ENCODE measurements at regions of chr17 and their contacts with region 1.

Region 1: GRCh38 chr17:31558748-31559644 is 167.5 kb downstream of the RAB11FIP4 start:
- DNase-seq: peak; percentile 82 to 91
- ATAC-seq: peak; percentile 85 to 86
- H3K4me3 ChIP-seq: peak overlapping the region; percentile 81
- H3K27ac ChIP-seq: peak overlapping the region; percentile 97 to 98
- H3K4me1 ChIP-seq: peaks cover 31% of the 10 kb centered on the region
- CTCF ChIP-seq: peak; percentile 99
- EP300 ChIP-seq: no peak
- POLR2A ChIP-seq: peak; percentile 67
- RAD21 ChIP-seq: peak; percentile 71 to 96

Region 2: DNA sequence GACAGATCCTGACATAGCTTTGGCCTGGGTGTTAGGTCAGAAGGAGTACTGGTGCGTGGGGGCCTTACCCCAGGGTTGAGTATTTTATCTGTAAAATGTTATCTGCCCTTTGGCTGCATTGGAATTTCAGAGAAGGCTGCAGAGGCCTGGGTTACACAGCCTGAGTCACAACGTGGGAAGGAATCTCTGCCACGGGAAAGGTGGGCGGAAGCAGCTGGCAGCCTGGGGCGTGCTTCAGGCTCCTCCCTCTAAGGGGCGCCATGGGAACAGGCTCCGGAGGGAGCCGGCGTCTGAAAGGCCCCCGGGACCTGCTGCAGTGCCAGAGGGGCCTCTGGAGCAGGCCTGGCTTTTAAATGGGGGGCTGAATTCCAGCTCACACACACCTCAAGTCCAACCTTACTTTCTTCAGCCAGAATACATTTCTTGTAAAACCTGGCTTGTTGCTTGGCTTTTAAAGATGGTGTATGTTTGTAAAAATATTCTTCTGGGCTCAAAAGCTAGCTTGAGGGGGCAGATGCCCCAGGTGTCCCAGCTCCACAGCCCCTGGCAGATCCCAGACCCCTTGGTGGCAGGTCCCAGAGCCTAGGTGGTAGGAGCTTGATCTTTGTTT is 25.3 kb before region 1 on chr17:
- CTCF ChIA-PET with region 1: interaction called, 17 read pairs
- POLR2A ChIA-PET with region 1: no interaction called
- DNase-seq: peak; percentile 45 to 79
- ATAC-seq: peak; percentile 58 to 83
- H3K4me3 ChIP-seq: no peak overlapping the region
- H3K27ac ChIP-seq: peak overlapping the region in 1 of 2 experiments; percentile 29; a peak in 3 of 6 replicates
- H3K4me1 ChIP-seq: peaks cover 7% of the 10 kb centered on the region
- CTCF ChIP-seq: peak; percentile 39
- EP300 ChIP-seq: no peak
- POLR2A ChIP-seq: no peak
- RAD21 ChIP-seq: peak; percentile 56 to 63

Region 3: GRCh38 chr17:31581022-31581490 is 22.1 kb after region 1 on chr17:
- CTCF ChIA-PET with region 1: interaction called, 12 read pairs
- POLR2A ChIA-PET with region 1: interaction called, 3 read pairs
- DNase-seq: no peak
- ATAC-seq: peak; percentile 22 to 52; a peak in 4 of 6 replicates
- H3K4me3 ChIP-seq: no peak overlapping the region
- H3K27ac ChIP-seq: peak overlapping the region in 1 of 2 experiments; percentile 12; a peak in 1 of 6 replicates
- H3K4me1 ChIP-seq: peaks cover 4% of the 10 kb centered on the region; the same call in 1 of the 3 replicates
- CTCF ChIP-seq: no peak
- EP300 ChIP-seq: no peak
- POLR2A ChIP-seq: no peak
- RAD21 ChIP-seq: no peak

Region 4: GRCh38 chr17:31596382-31597323 is 37.7 kb after region 1 on chr17:
- CTCF ChIA-PET with region 1: interaction called, 12 read pairs
- POLR2A ChIA-PET with region 1: no interaction called
- DNase-seq: peak; percentile 86 to 87
- ATAC-seq: peak; percentile 92 to 95
- H3K4me3 ChIP-seq: no peak overlapping the region
- H3K27ac ChIP-seq: peak overlapping the region; percentile 49 to 83; a peak in 5 of 6 replicates
- H3K4me1 ChIP-seq: peaks cover 38% of the 10 kb centered on the region
- CTCF ChIP-seq: no peak
- EP300 ChIP-seq: no peak
- POLR2A ChIP-seq: 0 out of 2 replicates have a peak, but pooled peaks have one; percentile 11
- RAD21 ChIP-seq: peak in 1 of 2 experiments; percentile 12; a peak in 1 of 5 replicates

Region 5: GRCh38 chr17:31834448-31834847 is 275.5 kb after region 1 on chr17:
- CTCF ChIA-PET with region 1: interaction called, 377 read pairs
- POLR2A ChIA-PET with region 1: no interaction called
- DNase-seq: no peak
- ATAC-seq: no peak
- H3K4me3 ChIP-seq: no peak overlapping the region
- H3K27ac ChIP-seq: no peak overlapping the region
- H3K4me1 ChIP-seq: no peaks in the 10 kb centered on the region
- CTCF ChIP-seq: no peak
- EP300 ChIP-seq: no peak
- POLR2A ChIP-seq: no peak
- RAD21 ChIP-seq: no peak

Measured in A549 (cell line).